CD8-positive, alpha-beta T cell (primary cell): ENCODE measurements at regions of chr4 and their contacts with region 1.

Region 1: DNA sequence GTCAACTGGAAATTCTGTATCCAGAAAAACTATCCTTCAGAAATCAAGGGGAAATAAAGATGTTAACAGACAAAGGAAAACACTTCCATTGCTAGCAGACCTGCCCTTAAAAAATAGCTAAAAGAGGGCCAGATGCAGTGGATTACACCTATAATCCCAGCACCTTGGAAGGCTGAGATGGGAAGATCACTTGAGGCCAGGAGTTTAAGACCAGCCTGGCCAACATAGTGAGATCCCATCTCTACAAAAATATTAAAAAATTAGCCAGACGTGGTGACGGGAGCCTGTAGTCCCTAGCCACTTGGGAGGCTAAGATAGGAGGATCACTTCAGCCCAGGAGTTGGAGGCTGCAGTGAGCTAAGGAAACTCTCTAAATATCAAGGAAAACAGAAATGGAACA is 67.4 kb downstream of the CNOT6L start:
- DNase-seq: no peak
- ATAC-seq: no peak
- H3K4me3 ChIP-seq: no peak overlapping the region
- H3K4me3 Mint-ChIP-seq: no peak overlapping the region
- H3K27ac ChIP-seq: no peak overlapping the region
- H3K27ac Mint-ChIP-seq: no peak overlapping the region
- H3K4me1 ChIP-seq: peaks cover 5% of the 10 kb centered on the region
- H3K4me1 Mint-ChIP-seq: peaks cover 42% of the 10 kb centered on the region
- H3K27me3 ChIP-seq: no peaks in the 10 kb centered on the region
- H3K27me3 Mint-ChIP-seq: no peaks in the 10 kb centered on the region
- CTCF ChIP-seq: no peak

Region 2: DNA sequence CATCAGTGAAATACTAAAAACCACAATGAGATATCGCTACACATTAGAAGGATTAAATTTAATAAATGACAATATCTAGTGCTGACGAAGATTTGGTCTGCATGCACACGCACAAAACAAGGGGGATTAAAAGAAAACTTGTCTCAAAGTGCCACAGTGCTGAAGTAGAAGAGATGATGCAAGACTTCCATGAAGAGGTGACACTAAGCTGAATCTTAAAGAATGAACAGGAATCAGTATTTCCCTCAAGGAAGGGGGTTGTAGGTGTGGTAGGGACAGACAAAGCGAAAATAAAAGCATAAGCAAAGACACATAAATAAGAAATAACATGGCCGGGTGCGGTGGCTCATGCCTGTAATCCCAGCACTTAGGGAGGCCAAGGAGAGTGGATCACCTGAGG is 33.9 kb after region 1 on chr4:
- CTCF ChIA-PET with region 1: no interaction called
- POLR2A ChIA-PET with region 1: no interaction called
- intact Hi-C with region 1: loop called in 1 of 2 experiments (anchors 5 kb)
- DNase-seq: no peak
- ATAC-seq: no peak
- H3K4me3 ChIP-seq: no peak overlapping the region
- H3K4me3 Mint-ChIP-seq: peak overlapping the region; percentile 6
- H3K27ac ChIP-seq: no peak overlapping the region
- H3K27ac Mint-ChIP-seq: no peak overlapping the region
- H3K4me1 ChIP-seq: peaks cover 76% of the 10 kb centered on the region
- H3K4me1 Mint-ChIP-seq: peaks cover 79% of the 10 kb centered on the region
- H3K27me3 ChIP-seq: no peaks in the 10 kb centered on the region
- H3K27me3 Mint-ChIP-seq: no peaks in the 10 kb centered on the region
- CTCF ChIP-seq: no peak

Region 3: GRCh38 chr4:78529569-78530209 is 777.9 kb after region 1 on chr4:
- CTCF ChIA-PET with region 1: no interaction called
- POLR2A ChIA-PET with region 1: no interaction called
- intact Hi-C with region 1: no loop called
- DNase-seq: no peak
- ATAC-seq: no peak
- H3K4me3 ChIP-seq: no peak overlapping the region
- H3K4me3 Mint-ChIP-seq: no peak overlapping the region
- H3K27ac ChIP-seq: no peak overlapping the region
- H3K27ac Mint-ChIP-seq: no peak overlapping the region
- H3K4me1 ChIP-seq: no peaks in the 10 kb centered on the region
- H3K4me1 Mint-ChIP-seq: no peaks in the 10 kb centered on the region
- H3K27me3 ChIP-seq: no peaks in the 10 kb centered on the region
- H3K27me3 Mint-ChIP-seq: no peaks in the 10 kb centered on the region
- CTCF ChIP-seq: no peak